Caco-2 (cell line): ENCODE measurements at regions of chr4 and their contacts with region 1.

Region 1: DNA sequence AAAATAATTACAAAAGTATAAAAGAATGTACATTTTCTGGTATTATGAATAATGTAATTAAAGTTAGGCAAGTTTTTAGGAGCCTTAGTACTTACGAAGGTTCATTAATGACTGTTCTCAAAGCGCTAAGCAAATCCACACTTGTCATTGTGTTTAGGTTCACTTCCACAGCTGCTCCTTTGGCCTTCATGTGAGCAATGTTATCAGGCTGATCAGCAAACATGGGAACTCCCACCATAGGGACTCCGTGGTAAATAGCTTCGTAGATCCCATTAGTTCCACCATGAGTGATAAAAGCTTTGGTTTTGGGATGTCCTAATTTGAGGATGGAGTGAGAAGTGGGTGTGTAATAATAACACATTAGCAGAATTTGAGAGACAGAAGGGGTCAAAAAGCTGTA is 45.1 kb downstream of the UGT2A2 start:
- DNase-seq: peak in 1 of 2 experiments; percentile 38
- H3K4me3 ChIP-seq: no peak overlapping the region
- H3K4me3 Mint-ChIP-seq: no peak overlapping the region
- H3K27ac Mint-ChIP-seq: no peak overlapping the region
- H3K4me1 ChIP-seq: peaks cover 35% of the 10 kb centered on the region
- H3K4me1 Mint-ChIP-seq: peaks cover 29% of the 10 kb centered on the region
- H3K27me3 ChIP-seq: no peaks in the 10 kb centered on the region
- H3K27me3 Mint-ChIP-seq: no peaks in the 10 kb centered on the region
- CTCF ChIP-seq: no peak

Region 2: GRCh38 chr4:69196209-69196965 is 398.0 kb before region 1 on chr4:
- CTCF ChIA-PET with region 1: no interaction called
- POLR2A ChIA-PET with region 1: no interaction called
- intact Hi-C with region 1: loop called (anchors 10 kb)
- DNase-seq: no peak
- H3K4me3 ChIP-seq: no peak overlapping the region
- H3K4me3 Mint-ChIP-seq: no peak overlapping the region
- H3K27ac Mint-ChIP-seq: no peak overlapping the region
- H3K4me1 ChIP-seq: 0 out of 2 replicates have a peak, but pooled peaks cover 4% of the 10 kb centered on the region
- H3K4me1 Mint-ChIP-seq: peaks cover 7% of the 10 kb centered on the region
- H3K27me3 ChIP-seq: no peaks in the 10 kb centered on the region
- H3K27me3 Mint-ChIP-seq: no peaks in the 10 kb centered on the region
- CTCF ChIP-seq: no peak

Region 3: DNA sequence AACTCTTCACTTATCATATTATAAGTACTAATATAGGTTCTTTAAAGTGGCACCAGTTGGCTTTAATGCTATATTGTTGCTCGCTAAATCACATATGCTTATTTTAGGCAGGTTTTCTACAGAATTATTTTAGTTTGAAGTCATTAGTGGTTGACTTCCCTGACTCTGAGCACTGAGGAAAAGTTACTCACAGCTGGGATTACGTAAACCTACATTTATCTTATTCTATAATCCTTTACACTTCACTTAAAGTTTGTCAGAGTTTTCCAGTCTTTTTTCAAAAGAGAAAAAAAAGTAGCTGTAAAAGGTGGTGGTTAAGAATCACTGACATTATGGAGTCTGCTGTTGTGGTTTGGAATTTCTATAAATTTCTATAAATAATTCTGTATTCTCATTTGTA is 104.5 kb before region 1 on chr4:
- CTCF ChIA-PET with region 1: no interaction called
- POLR2A ChIA-PET with region 1: no interaction called
- intact Hi-C with region 1: loop called (anchors 2 kb)
- DNase-seq: no peak
- H3K4me3 ChIP-seq: no peak overlapping the region
- H3K4me3 Mint-ChIP-seq: no peak overlapping the region
- H3K27ac Mint-ChIP-seq: no peak overlapping the region
- H3K4me1 ChIP-seq: 0 out of 2 replicates have a peak, but pooled peaks cover 5% of the 10 kb centered on the region
- H3K4me1 Mint-ChIP-seq: peaks cover 15% of the 10 kb centered on the region
- H3K27me3 ChIP-seq: no peaks in the 10 kb centered on the region
- H3K27me3 Mint-ChIP-seq: no peaks in the 10 kb centered on the region
- CTCF ChIP-seq: no peak